ENCODE measurements at regions of chr16 and their contacts with region 1.

Region 1: DNA sequence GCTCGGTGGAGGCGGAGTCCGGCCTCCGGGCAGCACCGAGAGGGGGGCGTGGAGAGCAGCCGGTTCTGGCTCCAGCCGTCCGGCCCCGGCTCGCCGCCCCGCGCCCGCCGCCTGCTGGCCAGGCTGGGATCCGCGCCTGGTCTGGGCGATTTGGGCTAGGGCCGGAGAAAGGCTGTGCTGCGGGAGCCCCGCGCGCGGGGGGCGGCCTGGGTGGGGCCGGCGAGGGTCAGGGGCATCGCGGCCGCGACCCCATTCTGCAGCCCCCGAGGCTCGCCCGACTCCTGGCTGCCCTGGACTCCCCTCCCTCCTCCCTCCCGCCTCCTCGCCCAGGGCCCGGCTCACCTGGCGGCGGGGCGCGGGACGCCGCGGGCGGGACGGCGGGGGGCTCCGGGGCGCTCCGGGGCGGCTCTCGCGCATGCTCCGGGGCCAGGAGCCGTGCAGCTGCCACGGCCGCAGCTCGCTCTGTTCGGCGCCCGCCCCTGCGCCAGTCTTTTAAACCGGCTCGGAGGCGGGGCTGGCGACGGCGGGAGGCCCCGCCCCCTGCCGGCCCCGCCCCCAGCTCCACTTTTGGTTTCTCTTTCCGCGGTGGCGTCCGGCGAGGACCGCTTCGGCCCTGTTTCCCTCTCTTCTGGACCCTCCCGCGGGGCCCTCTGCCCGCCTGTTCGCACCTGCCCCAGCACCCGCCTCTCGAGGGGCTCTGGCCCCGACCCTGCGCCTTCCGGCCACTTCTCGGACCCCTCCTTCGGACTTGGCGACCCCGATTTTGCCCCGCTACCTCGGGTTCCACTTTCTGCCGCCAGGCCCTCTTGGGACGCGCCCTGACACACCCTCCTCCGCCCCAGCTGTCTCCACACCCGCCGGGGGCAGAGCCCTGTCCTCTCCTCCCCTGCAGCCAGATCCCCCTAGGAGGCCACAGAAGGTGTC is at the start of gene SOCS1:
- DNase-seq: peak; percentile 59 to 95
- H3K4me3 ChIP-seq: peak within 1 kb of the TSS; percentile 61 to 97 (median 74)
- H3K27ac ChIP-seq: no peak within 1 kb of the TSS
- H3K4me1 ChIP-seq: peaks cover 0 to 23% (median 8%) of the 10 kb centered on the region in 4 experiments; a peak in 5 of 7 replicates
- H3K27me3 ChIP-seq: no peaks in the 10 kb centered on the region; a peak in 1 of 7 replicates
- CTCF ChIP-seq: peak; percentile 74 to 81 (median 75)
- EP300 ChIP-seq: 0 out of 3 replicates have a peak, but pooled peaks of 1 of the 2 experiments have one; percentile 36
- POLR2A ChIP-seq: peak; percentile 94 to 97
- RAD21 ChIP-seq: peak; percentile 62 to 73
- total RNA-seq, gene SOCS1: 48.9 and 49.8 TPM in 2 replicates

Region 2: GRCh38 chr16:11032922-11033291 is 223.1 kb before region 1 on chr16:
- CTCF ChIA-PET with region 1: no interaction called
- POLR2A ChIA-PET with region 1: no interaction called
- DNase-seq: no peak
- H3K4me3 ChIP-seq: no peak overlapping the region
- H3K27ac ChIP-seq: no peak overlapping the region
- H3K4me1 ChIP-seq: peaks cover 0 to 6% (median 0%) of the 10 kb centered on the region in 4 experiments; a peak in 3 of 7 replicates
- H3K27me3 ChIP-seq: no peaks in the 10 kb centered on the region
- CTCF ChIP-seq: no peak
- EP300 ChIP-seq: no peak
- POLR2A ChIP-seq: no peak
- RAD21 ChIP-seq: no peak

Region 3: GRCh38 chr16:11183035-11183812 is 72.8 kb before region 1 on chr16:
- CTCF ChIA-PET with region 1: interaction called, 12 read pairs
- POLR2A ChIA-PET with region 1: interaction called, 7 read pairs
- DNase-seq: peak in 1 of 2 experiments; percentile 64
- H3K4me3 ChIP-seq: no peak overlapping the region
- H3K27ac ChIP-seq: no peak overlapping the region
- H3K4me1 ChIP-seq: peaks cover 3 to 17% (median 10%) of the 10 kb centered on the region in 4 experiments
- H3K27me3 ChIP-seq: no peaks in the 10 kb centered on the region
- CTCF ChIP-seq: peak; percentile 34 to 48 (median 46)
- EP300 ChIP-seq: no peak
- POLR2A ChIP-seq: no peak
- RAD21 ChIP-seq: peak; percentile 33 to 38

Region 4: GRCh38 chr16:11240636-11241473 is 15.1 kb before region 1 on chr16:
- CTCF ChIA-PET with region 1: interaction called, 5 read pairs
- POLR2A ChIA-PET with region 1: interaction called, 21 read pairs
- DNase-seq: no peak
- H3K4me3 ChIP-seq: no peak overlapping the region
- H3K27ac ChIP-seq: no peak overlapping the region
- H3K4me1 ChIP-seq: peaks cover 0 to 6% (median 3%) of the 10 kb centered on the region in 4 experiments; a peak in 2 of 7 replicates
- H3K27me3 ChIP-seq: no peaks in the 10 kb centered on the region
- CTCF ChIP-seq: no peak
- EP300 ChIP-seq: no peak
- POLR2A ChIP-seq: no peak
- RAD21 ChIP-seq: no peak

Region 5: GRCh38 chr16:11283820-11284248 is 27.8 kb after region 1 on chr16:
- CTCF ChIA-PET with region 1: interaction called, 5 read pairs
- POLR2A ChIA-PET with region 1: interaction called, 14 read pairs
- DNase-seq: no peak
- H3K4me3 ChIP-seq: no peak overlapping the region
- H3K27ac ChIP-seq: no peak overlapping the region
- H3K4me1 ChIP-seq: peaks cover 0 to 5% (median 1%) of the 10 kb centered on the region in 4 experiments; a peak in 2 of 7 replicates
- H3K27me3 ChIP-seq: no peaks in the 10 kb centered on the region
- CTCF ChIP-seq: peak in 1 of 3 experiments; percentile 7; a peak in 1 of 4 replicates
- EP300 ChIP-seq: no peak
- POLR2A ChIP-seq: no peak
- RAD21 ChIP-seq: peak in 1 of 2 experiments; percentile 16; a peak in 1 of 4 replicates

Region 6: GRCh38 chr16:11312718-11313492 is 56.9 kb after region 1 on chr16:
- CTCF ChIA-PET with region 1: interaction called, 6 read pairs
- POLR2A ChIA-PET with region 1: interaction called, 27 read pairs
- DNase-seq: no peak
- H3K4me3 ChIP-seq: peak overlapping the region in 1 of 4 experiments; percentile 2; a peak in 1 of 8 replicates
- H3K27ac ChIP-seq: peak overlapping the region; percentile 61; the same call in 1 of the 2 replicates
- H3K4me1 ChIP-seq: peaks cover 26 to 45% (median 26%) of the 10 kb centered on the region in 4 experiments
- H3K27me3 ChIP-seq: no peaks in the 10 kb centered on the region
- CTCF ChIP-seq: no peak
- EP300 ChIP-seq: peak in 1 of 2 experiments; percentile 6; a peak in 1 of 3 replicates
- POLR2A ChIP-seq: no peak
- RAD21 ChIP-seq: no peak

Region 7: GRCh38 chr16:11345040-11345862 is 89.3 kb after region 1 on chr16 and contains the start of gene RMI2:
- CTCF ChIA-PET with region 1: interaction called, 9 read pairs
- POLR2A ChIA-PET with region 1: interaction called, 11 read pairs
- DNase-seq: peak; percentile 84 to 93
- H3K4me3 ChIP-seq: peak within 1 kb of the TSS; percentile 50 to 94 (median 69)
- H3K27ac ChIP-seq: peak within 1 kb of the TSS; percentile 84; the same call in 1 of the 2 replicates
- H3K4me1 ChIP-seq: peaks cover 6 to 24% (median 14%) of the 10 kb centered on the region in 4 experiments
- H3K27me3 ChIP-seq: no peaks in the 10 kb centered on the region
- CTCF ChIP-seq: no peak
- EP300 ChIP-seq: no peak
- POLR2A ChIP-seq: peak; percentile 79 to 81
- RAD21 ChIP-seq: no peak
- total RNA-seq, gene RMI2: 96.0 and 96.9 TPM in 2 replicates

Measured in H1 (cell line).